ENCODE measurements at regions of chr3 and their contacts with region 1.

Region 1: GRCh38 chr3:48898383-48899234 is at the start of gene SLC25A20:
- DNase-seq: peak; percentile 85 to 95
- H3K4me3 ChIP-seq: peak within 1 kb of the TSS; percentile 71 to 83 (median 76)
- H3K27ac ChIP-seq: no peak within 1 kb of the TSS
- H3K4me1 ChIP-seq: peaks cover 0 to 6% (median 3%) of the 10 kb centered on the region in 4 experiments; a peak in 2 of 7 replicates
- H3K27me3 ChIP-seq: no peaks in the 10 kb centered on the region
- CTCF ChIP-seq: no peak
- EP300 ChIP-seq: no peak
- POLR2A ChIP-seq: peak in 1 of 2 experiments; percentile 46; a peak in 1 of 3 replicates
- RAD21 ChIP-seq: no peak
- total RNA-seq, gene SLC25A20: 3.8 and 5.1 TPM in 2 replicates

Region 2: DNA sequence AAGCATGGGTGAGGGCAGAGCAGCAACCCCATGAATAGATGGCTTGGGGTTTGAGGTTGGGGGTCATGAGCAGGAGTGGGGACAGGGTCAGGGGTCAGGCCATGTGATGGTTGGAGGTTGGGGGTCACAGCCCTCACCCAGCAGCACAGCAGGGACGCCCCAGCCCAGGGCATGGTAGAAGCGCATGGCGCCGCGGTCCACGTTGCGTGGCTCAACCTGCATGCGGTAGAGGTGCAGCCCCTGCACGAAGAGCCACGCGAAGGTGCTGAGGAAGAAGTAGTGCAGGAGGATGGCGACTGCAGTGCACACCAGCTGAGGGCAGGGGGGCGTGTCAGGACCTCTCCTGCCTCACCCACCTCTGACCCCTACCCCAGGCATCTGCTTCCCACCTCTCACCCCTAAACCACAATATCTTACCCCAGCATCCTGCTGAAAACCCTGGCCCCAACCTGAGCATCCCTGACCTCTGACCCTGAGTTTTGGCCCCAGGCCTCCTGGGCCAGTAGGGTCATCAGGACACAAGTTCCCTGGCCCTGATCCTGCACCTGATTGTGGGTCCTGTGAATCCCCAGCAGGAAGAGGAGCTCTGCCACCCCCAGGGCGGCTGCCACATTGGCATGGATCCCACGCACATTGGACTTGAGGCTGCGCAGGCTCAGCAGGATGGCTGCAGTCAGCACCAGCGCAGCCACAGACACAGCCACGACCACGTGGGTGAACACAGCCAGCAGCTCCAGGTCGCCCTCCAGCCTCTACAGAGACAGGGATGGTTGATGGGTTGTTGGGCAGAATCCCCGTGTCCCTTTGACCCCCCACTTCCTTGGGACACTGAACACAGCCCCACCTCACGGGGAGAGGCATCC is 253.5 kb before region 1 on chr3:
- CTCF ChIA-PET with region 1: no interaction called
- POLR2A ChIA-PET with region 1: no interaction called
- DNase-seq: no peak
- H3K4me3 ChIP-seq: no peak overlapping the region
- H3K27ac ChIP-seq: no peak overlapping the region
- H3K4me1 ChIP-seq: no peaks in the 10 kb centered on the region
- H3K27me3 ChIP-seq: no peaks in the 10 kb centered on the region
- CTCF ChIP-seq: no peak
- EP300 ChIP-seq: no peak
- POLR2A ChIP-seq: no peak
- RAD21 ChIP-seq: no peak

Region 3: DNA sequence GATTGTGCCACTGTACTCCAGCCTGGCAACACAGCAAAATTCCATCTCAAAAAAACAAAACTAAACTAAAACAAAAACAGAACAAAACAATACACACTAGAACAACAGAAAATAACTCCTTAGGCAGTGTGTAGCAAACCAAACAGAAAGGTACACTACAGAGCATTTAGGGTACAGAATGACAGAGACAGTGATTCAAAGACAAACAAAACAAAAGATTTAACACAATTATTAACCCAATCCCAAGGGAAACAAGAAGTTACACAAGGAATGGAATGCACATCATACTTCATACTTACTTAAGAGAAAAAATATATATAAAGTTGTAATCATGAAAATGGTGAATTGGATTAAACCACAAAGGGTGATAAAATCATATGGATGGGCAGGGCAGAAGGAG is 12.9 kb before region 1 on chr3:
- CTCF ChIA-PET with region 1: interaction called, 7 read pairs
- POLR2A ChIA-PET with region 1: interaction called, 11 read pairs
- DNase-seq: no peak
- H3K4me3 ChIP-seq: no peak overlapping the region
- H3K27ac ChIP-seq: no peak overlapping the region
- H3K4me1 ChIP-seq: no peaks in the 10 kb centered on the region
- H3K27me3 ChIP-seq: no peaks in the 10 kb centered on the region
- CTCF ChIP-seq: no peak
- EP300 ChIP-seq: no peak
- POLR2A ChIP-seq: no peak
- RAD21 ChIP-seq: no peak

Region 4: GRCh38 chr3:48982686-48983085 is 84.1 kb after region 1 on chr3:
- CTCF ChIA-PET with region 1: no interaction called
- POLR2A ChIA-PET with region 1: no interaction called
- DNase-seq: no peak
- H3K4me3 ChIP-seq: no peak overlapping the region
- H3K27ac ChIP-seq: no peak overlapping the region
- H3K4me1 ChIP-seq: no peaks in the 10 kb centered on the region
- H3K27me3 ChIP-seq: no peaks in the 10 kb centered on the region
- CTCF ChIP-seq: no peak
- EP300 ChIP-seq: no peak
- POLR2A ChIP-seq: no peak
- RAD21 ChIP-seq: no peak

Measured in H1 (cell line).